ENCODE measurements at regions of chr1 and their contacts with region 1.

Region 1: GRCh38 chr1:5980314-5981008 is 11.8 kb downstream of the NPHP4 start:
- DNase-seq: no peak
- H3K4me3 ChIP-seq: no peak overlapping the region
- H3K27ac ChIP-seq: no peak overlapping the region
- H3K4me1 ChIP-seq: peaks cover 6% of the 10 kb centered on the region
- H3K27me3 ChIP-seq: no peaks in the 10 kb centered on the region
- CTCF ChIP-seq: no peak

Region 2: GRCh38 chr1:5938101-5938646 is 42.3 kb before region 1 on chr1:
- CTCF ChIA-PET with region 1: no interaction called
- dilution Hi-C with region 1: no loop called
- in situ Hi-C with region 1: no loop called
- intact Hi-C with region 1: no loop called
- DNase-seq: no peak
- H3K4me3 ChIP-seq: no peak overlapping the region
- H3K27ac ChIP-seq: no peak overlapping the region
- H3K4me1 ChIP-seq: peaks cover 8% of the 10 kb centered on the region
- H3K27me3 ChIP-seq: no peaks in the 10 kb centered on the region
- CTCF ChIP-seq: no peak

Region 3: GRCh38 chr1:5949085-5949760 is 31.2 kb before region 1 on chr1:
- CTCF ChIA-PET with region 1: no interaction called
- dilution Hi-C with region 1: loop called (anchors 5 kb)
- in situ Hi-C with region 1: no loop called
- intact Hi-C with region 1: no loop called
- DNase-seq: no peak
- H3K4me3 ChIP-seq: no peak overlapping the region
- H3K27ac ChIP-seq: no peak overlapping the region
- H3K4me1 ChIP-seq: no peaks in the 10 kb centered on the region
- H3K27me3 ChIP-seq: no peaks in the 10 kb centered on the region
- CTCF ChIP-seq: no peak

Region 4: DNA sequence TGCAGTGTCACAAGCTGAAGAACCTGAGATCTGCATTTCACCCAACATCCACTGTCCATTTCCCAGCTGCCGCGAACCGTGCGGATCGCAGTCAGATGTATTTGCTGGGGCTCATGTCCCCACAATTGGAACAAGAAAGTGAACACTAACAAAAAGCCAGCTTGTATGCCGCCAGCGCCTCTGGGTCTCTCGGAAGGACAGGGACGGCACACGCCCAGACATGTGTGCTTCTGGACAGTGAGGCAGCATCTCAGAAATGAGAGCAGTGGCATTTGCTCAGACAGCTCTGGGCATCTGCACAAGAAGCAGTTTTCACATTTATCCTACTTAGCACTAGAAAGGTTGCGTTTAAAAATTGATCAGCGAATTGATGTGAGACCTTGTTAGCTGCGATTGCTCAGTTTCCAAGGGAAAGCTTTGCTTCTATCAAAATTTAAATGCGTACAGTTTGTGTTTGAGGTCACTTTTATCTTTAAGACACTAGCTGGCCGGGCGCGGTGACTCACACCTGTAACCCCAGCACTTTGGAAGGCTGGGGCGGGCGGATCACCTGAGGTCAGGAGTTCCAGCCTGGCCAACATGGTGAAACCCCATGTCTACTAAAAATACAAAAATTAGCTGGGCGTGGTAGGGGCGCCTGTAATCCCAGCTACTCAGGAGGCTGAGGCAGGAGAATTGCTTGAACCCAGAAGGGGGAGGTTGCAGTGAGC is 93.9 kb after region 1 on chr1:
- CTCF ChIA-PET with region 1: no interaction called
- dilution Hi-C with region 1: loop called (anchors 5 kb)
- in situ Hi-C with region 1: no loop called
- intact Hi-C with region 1: no loop called
- DNase-seq: peak; percentile 68
- H3K4me3 ChIP-seq: peak overlapping the region in 1 of 3 experiments; percentile 37
- H3K27ac ChIP-seq: peak overlapping the region; percentile 45
- H3K4me1 ChIP-seq: peaks cover 20% of the 10 kb centered on the region
- H3K27me3 ChIP-seq: no peaks in the 10 kb centered on the region
- CTCF ChIP-seq: no peak

Region 5: GRCh38 chr1:6396998-6397397 is 416.5 kb after region 1 on chr1:
- CTCF ChIA-PET with region 1: no interaction called
- dilution Hi-C with region 1: no loop called
- in situ Hi-C with region 1: no loop called
- intact Hi-C with region 1: no loop called
- DNase-seq: no peak
- H3K4me3 ChIP-seq: no peak overlapping the region
- H3K27ac ChIP-seq: no peak overlapping the region
- H3K4me1 ChIP-seq: peaks cover 11% of the 10 kb centered on the region
- H3K27me3 ChIP-seq: no peaks in the 10 kb centered on the region
- CTCF ChIP-seq: peak; percentile 13 to 62